ENCODE measurements at regions of chr2 and their contacts with region 1.

Region 1: DNA sequence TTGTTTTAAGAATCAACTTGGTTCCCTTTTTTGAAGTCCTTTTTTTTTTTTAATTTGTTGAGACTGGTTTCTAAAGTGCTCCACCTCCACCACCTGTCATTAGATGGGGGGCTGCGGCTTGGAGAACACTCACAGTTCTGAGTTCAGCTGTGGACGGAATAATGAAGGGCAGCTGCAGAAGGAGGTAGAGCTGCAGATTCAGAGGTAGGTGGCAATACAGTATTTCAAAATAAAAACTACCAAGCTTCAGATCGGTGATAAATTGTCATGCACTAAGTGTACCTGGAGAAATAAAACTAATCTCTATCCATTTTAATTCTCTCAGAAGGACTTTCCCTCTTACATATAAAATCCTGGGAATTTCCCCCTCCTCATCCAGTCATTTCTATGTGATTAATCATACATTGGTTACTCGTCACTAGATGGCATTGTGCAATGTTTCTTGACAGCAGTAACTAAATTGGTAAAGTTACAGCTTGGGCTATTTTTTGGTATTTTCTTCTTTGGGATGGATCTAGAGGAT is 81.1 kb upstream of the SLC39A10 start:
- DNase-seq: no peak
- ATAC-seq: peak in 1 of 4 donors; percentile 62
- H3K4me3 ChIP-seq: no peak overlapping the region
- H3K27ac ChIP-seq: no peak overlapping the region
- H3K4me1 ChIP-seq: peaks cover 0 to 35% (median 0%) of the 10 kb centered on the region in 12 donors
- H3K27me3 ChIP-seq: no peaks in the 10 kb centered on the region
- CTCF ChIP-seq: peak in 9 of 12 donors; percentile 14 to 58 (median 48)
- POLR2A ChIP-seq: no peak

Region 2: GRCh38 chr2:195930082-195930481 is 354.1 kb after region 1 on chr2:
- intact Hi-C with region 1: loop called in 2 of 10 experiments (anchors 10 kb)
- DNase-seq: no peak
- ATAC-seq: no peak
- H3K4me3 ChIP-seq: no peak overlapping the region
- H3K27ac ChIP-seq: no peak overlapping the region
- H3K4me1 ChIP-seq: no peaks in the 10 kb centered on the region
- H3K27me3 ChIP-seq: no peaks in the 10 kb centered on the region
- CTCF ChIP-seq: no peak
- POLR2A ChIP-seq: no peak

Region 3: DNA sequence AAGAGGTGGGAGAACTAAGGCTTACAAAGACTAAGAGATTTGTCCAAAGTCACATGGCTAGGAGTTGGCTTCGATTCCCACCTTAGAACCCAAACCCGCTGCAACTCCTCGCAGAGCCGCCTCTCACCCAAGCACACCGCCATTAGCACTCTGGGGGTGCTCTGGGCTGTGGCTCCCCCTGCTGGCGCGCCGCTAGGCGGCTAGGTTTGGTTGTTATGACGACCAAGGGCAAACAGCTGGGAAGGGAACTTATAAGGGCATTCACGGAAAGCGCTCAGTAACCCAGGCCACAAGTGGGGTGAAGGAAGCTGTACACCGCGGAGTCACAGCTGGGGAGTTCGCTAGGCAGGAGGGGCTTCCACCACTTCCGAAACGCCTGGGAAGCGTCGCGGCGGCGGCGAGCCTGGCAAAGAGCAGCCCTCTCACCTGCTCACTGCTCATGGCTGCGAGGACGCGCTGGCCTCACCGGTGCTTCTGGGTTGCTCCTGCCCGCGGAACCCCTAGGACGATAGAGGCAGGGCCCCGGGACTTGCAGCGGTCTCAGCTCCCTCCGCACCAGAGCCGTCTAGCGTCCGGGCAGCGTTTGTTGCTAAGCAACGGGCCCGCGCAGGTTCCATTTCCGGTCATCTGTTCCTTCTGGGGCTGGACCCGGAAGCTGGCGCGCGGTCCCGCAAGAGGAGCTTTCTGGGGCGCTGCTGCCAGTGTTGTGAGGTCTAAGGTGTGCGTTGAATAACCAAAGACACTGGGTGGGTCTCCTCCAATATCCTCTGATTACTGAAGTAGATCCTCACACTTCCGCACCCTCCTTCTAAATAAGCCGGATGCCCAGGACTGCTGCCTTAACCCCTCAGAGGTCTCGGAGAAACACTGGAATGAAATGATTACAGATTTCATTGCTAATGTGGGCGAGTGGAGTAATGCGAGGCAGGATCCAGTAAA is 492.6 kb after region 1 on chr2 and contains the start of gene DNAH7:
- intact Hi-C with region 1: loop called in 5 of 10 experiments (anchors 10 kb)
- DNase-seq: peak; percentile 87 to 94 (median 92)
- ATAC-seq: peak; percentile 95 to 99 (median 98)
- H3K4me3 ChIP-seq: peak within 1 kb of the TSS; percentile 60 to 90 (median 75)
- H3K27ac ChIP-seq: peak within 1 kb of the TSS in 7 of 12 donors; percentile 6 to 51 (median 20)
- H3K4me1 ChIP-seq: peaks cover 0 to 17% (median 6%) of the 10 kb centered on the region in 12 donors
- H3K27me3 ChIP-seq: no peaks in the 10 kb centered on the region
- CTCF ChIP-seq: peak in 7 of 12 donors; percentile 22 to 95 (median 82)
- POLR2A ChIP-seq: peak in 1 of 2 donors; percentile 38
- total RNA-seq, gene DNAH7: 0.11 to 1.5 (median 0.40) TPM in 8 of 9 donors, not detected in the other

Measured in heart left ventricle (tissue), 16 donors.